Posterior cingulate gyrus (tissue), 11 donors: ENCODE measurements at regions of chr13 and their contacts with region 1.

Region 1: DNA sequence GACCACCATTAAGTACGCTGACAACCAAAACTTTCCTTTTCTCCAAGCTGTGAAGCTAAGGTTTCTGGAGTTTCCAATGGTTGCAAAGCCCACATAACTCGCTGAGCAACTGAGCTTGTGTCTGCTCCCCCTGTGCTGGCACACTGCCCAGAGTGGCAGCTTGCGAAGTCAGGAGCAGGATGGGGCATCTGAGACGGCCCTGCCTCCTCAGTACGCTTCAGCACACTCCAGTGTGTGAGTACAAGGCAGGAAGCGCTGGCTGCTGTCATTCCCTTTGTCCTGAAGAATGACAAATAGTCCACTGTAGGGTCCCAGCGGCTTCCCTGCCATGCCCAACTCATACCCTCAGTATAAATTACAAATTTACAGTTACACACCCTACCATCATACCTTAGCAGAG is 51.5 kb downstream of the SKA3 start:
- DNase-seq: peak in 3 of 10 donors; percentile 12 to 71 (median 33)

Region 2: DNA sequence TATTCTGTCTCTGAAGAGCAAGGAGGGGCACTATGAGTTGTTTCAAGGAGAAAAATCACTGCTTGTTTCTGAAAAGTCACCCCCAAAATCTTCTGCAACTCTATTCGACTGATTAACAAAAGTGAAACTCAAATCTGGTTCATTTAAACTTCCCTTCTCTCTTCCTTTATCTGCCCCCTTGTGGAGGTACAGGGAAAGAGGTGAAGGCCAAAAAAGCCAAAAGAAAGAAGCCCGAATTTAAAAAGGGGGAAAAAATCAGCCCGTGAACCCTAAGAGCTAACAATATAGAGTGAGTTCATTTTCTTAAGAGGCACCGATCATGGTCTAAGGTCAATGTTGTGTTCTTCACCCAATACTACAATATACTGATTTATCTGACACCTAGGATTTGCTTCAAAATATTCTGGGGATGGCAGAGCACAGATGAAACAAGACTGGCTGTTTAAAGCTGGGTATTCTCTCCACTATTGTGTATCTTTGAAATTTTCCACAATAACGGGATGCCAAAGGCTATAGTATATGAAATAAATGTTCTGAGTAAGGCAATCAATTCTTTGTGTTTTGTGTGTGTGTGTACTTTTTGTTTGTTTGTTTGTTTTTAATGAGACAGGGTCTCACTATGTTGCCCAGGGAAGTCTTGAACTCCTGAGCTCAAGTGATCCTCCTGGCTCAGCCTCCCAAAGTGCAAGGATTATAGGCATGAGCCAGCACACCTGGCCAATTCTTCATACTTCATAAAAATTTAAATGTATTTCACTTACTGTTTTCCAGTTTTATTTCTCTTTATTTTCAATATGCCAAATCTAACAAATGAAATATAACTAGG is 296.1 kb before region 1 on chr13:
- intact Hi-C with region 1: no loop called
- DNase-seq: no peak

Region 3: DNA sequence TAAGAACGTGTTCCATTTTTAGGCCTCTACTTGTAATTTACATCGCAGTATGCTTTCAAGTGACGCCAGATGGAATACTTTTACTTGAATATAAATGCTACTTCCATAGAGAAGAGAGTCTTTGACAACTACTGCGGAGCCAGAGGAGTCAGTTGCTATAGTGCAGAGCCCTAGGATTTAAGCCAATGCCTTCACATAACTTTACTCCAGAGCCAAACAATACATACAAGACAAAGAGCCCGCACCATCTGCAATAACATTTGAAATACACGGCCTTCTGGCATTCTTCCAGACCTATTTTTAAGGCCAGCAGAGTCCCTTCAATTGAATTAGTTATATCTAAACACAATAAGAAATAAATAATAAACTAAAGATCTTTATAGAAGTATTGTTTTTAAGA is 281.7 kb before region 1 on chr13:
- intact Hi-C with region 1: loop called (anchors 5 kb)
- DNase-seq: no peak

Region 4: DNA sequence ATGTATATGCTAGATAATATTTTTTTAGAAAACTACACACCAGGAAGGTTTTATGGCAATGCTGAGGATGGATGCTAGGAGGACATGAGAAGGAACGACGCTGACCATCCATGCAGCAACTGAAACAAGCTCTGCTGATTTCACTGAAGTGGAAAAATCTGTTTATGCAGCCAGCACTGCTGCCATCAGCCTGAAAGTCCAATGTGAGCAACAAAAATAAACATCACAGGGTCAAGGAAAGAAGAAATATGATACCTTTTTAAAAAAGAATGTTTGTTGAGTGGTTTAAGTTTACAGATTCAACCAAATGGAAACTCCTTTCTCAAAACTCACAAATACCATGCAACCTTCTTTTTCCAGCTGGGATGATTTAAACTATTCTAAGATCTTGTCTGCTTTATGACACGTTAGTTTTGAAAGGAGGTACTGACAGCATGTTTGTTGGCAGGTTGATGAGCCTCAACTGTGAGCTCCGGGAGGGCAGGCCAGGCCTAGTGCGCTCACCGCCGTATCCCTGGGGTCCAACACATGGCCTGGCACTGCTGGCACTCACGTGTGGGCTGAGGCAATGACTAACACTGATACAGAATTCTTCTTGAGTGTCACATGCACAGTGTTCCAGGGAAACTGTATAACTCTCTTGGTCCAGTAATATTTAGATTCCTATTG is 110.2 kb before region 1 on chr13:
- intact Hi-C with region 1: no loop called
- DNase-seq: peak in 1 of 10 donors; percentile 40